ENCODE measurements at regions of chr10 and their contacts with region 1.

Region 1: DNA sequence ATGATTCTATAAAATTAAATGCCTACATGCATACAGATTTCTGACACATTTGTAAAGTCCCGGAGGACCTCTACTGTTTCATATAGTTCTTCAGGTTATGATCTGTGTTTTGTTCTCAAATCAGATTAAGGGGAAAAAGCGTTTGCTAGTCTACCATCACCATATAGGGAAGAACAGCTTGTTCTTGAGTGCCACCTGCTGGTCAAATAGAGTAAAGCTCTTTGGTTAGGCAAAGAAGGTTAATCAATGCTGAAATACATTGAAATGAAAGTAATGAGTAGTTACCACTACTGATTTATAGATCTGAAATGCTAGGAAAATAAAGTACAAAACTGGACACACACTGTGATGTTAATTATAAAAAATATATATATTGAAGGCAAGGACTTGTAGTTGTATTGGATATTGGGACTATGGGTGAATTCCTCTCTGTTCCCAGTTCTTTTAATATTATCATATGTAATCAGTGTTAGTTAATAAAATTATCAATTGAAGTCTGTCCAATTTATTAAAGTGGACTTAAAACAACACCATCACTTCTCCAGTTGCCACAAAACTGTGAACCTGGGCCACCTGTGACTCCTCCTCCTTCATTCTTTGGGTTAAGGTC is 72.6 kb upstream of the PDLIM1 start:
- DNase-seq: no peak
- H3K4me3 ChIP-seq: no peak overlapping the region
- H3K27ac ChIP-seq: no peak overlapping the region
- H3K4me1 ChIP-seq: peaks cover 0 to 3% (median 0%) of the 10 kb centered on the region in 4 experiments; a peak in 2 of 7 replicates
- H3K27me3 ChIP-seq: no peaks in the 10 kb centered on the region
- CTCF ChIP-seq: peak in 2 of 3 experiments; percentile 73 to 82; a peak in 3 of 4 replicates
- EP300 ChIP-seq: no peak
- POLR2A ChIP-seq: no peak
- RAD21 ChIP-seq: peak; percentile 95 to 96

Region 2: DNA sequence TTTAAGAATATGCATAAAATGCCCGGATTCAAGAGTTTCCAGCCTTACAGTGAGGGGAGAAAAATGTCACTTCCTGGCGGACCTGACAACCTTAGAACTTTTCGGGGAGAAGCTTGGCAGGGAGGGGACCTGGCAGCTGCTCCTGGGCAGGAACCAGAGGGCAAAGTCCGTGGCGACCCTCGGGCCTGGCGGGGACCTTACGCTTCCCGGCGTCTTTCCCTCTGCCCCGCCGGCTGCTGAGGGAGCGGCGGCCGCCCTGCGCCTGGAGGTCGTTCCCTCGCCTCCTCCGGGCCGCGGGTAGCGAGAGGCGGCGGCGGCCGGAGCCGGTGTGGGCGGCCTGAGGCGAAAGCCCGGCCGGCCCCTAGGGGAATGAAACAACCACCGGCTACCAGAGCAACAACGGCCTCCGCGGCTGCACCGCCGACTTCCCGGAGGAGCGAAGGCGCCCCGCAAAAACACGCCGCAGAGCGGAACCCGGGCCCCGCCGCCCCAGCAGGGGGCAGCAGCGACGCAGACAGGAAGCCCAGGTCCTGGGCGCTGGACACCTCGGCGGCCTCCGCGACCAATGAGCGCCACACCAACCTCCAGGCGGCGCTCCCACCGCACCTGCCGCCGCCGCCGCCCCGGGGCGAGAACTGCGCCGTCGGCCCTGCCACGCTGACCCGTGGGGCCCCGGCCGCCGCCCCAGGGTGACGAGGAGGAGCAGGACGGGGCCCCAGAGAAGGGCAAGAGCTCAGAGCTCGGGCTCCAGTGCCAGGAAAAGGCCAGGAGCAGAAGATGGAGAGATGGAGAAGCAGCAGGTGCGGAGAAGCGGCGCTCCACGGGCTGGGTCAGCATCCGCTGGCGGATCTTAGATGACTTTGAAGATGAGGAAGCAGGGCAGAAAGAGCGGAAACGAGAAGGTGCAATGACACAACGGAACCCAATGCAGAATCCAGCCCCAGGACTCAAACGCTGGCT is 179.9 kb before region 1 on chr10:
- CTCF ChIA-PET with region 1: interaction called, 11 read pairs
- POLR2A ChIA-PET with region 1: no interaction called
- DNase-seq: peak; percentile 51 to 96
- H3K4me3 ChIP-seq: peak overlapping the region; percentile 45 to 67 (median 62)
- H3K27ac ChIP-seq: peak overlapping the region; percentile 71
- H3K4me1 ChIP-seq: peaks cover 0 to 4% (median 0%) of the 10 kb centered on the region in 4 experiments; a peak in 2 of 7 replicates
- H3K27me3 ChIP-seq: no peaks in the 10 kb centered on the region
- CTCF ChIP-seq: peak; percentile 84 to 98 (median 86)
- EP300 ChIP-seq: peak in 1 of 2 experiments; percentile 69; a peak in 1 of 3 replicates
- POLR2A ChIP-seq: peak in 1 of 2 experiments; percentile 67; a peak in 1 of 3 replicates
- RAD21 ChIP-seq: peak; percentile 76 to 83

Region 3: GRCh38 chr10:95260397-95260881 is 103.0 kb before region 1 on chr10:
- CTCF ChIA-PET with region 1: interaction called, 17 read pairs
- POLR2A ChIA-PET with region 1: interaction called, 4 read pairs
- DNase-seq: peak in 1 of 2 experiments; percentile 28
- H3K4me3 ChIP-seq: no peak overlapping the region
- H3K27ac ChIP-seq: no peak overlapping the region
- H3K4me1 ChIP-seq: peaks cover 5 to 21% (median 12%) of the 10 kb centered on the region in 4 experiments
- H3K27me3 ChIP-seq: no peaks in the 10 kb centered on the region
- CTCF ChIP-seq: no peak
- EP300 ChIP-seq: no peak
- POLR2A ChIP-seq: no peak
- RAD21 ChIP-seq: no peak

Region 4: DNA sequence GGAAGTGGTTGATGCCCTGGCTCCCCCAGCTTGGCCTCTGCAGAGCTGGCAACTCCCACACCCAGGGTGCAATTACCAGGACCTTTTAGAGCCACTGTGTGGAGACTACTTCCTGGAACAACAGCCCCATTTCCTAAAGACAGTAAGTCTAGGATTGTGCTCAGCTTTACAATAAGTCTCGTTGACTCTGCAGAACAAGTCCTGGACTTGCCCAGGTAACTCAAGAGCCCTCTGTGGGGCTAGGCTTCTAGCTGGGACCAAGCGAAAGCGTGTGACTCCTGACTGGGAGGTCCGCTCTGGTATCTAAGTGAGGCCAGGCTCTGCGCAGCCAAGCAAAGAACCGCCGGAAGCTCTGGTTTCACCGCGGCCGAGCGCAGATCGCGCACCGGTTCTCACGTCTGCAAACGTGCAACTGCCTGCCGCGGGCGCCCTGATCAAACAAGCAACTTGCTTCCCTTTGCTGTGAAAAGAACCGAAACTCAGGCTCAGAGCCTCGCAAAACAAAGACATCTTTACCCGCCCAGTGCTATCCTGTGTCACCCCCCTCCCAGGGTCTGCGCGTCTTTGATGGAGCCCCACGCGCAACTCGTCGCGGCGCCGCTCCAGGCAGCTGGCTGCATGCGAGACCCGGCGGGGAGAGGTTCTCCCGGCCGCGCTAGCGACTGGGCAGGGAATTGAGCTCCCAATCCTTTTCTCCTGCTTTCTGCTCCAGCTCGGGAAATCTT is 68.2 kb before region 1 on chr10:
- CTCF ChIA-PET with region 1: interaction called, 39 read pairs
- POLR2A ChIA-PET with region 1: no interaction called
- DNase-seq: peak in 1 of 2 experiments; percentile 64
- H3K4me3 ChIP-seq: peak overlapping the region; percentile 2 to 51 (median 35); a peak in 7 of 8 replicates
- H3K27ac ChIP-seq: no peak overlapping the region
- H3K4me1 ChIP-seq: peaks cover 0 to 8% (median 7%) of the 10 kb centered on the region in 4 experiments; a peak in 6 of 7 replicates
- H3K27me3 ChIP-seq: peaks cover 2 to 30% (median 26%) of the 10 kb centered on the region in 4 experiments
- CTCF ChIP-seq: peak in 1 of 3 experiments; percentile 2; a peak in 1 of 4 replicates
- EP300 ChIP-seq: no peak
- POLR2A ChIP-seq: no peak
- RAD21 ChIP-seq: no peak

Region 5: DNA sequence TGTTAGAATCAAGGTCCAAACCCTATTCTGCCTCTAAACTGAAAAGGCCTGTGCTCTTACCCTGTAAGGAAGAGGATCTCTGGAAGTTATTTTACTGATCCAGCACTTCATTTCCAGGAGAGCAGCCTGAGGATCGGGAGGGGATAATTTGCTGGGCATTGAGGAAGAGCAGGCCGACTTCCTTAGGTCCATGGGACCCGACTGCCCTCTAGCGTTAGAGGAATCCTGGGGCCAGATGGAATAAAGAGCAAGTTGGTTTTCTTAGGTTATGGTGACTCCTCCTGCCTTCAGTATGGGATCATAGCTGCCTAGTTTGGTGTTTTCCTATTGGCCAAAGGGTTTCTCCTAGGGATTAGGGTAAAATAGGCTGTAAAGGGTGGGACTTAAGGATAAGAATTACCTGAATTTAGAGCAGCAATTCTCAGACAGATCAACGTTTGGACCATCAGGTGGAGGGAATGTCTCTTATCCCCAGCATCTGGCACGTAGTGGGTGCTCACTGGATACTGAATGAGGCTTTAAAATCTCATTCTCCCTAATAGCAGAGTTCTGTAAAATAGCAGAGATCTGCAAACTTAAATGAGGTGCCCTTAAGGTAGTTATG is 237.8 kb after region 1 on chr10:
- CTCF ChIA-PET with region 1: interaction called, 39 read pairs
- POLR2A ChIA-PET with region 1: interaction called, 4 read pairs
- DNase-seq: peak; percentile 84 to 88
- H3K4me3 ChIP-seq: no peak overlapping the region
- H3K27ac ChIP-seq: no peak overlapping the region
- H3K4me1 ChIP-seq: peaks cover 0 to 3% (median 0%) of the 10 kb centered on the region in 4 experiments; a peak in 1 of 7 replicates
- H3K27me3 ChIP-seq: no peaks in the 10 kb centered on the region
- CTCF ChIP-seq: peak; percentile 78 to 99 (median 98)
- EP300 ChIP-seq: no peak
- POLR2A ChIP-seq: no peak
- RAD21 ChIP-seq: peak; percentile 100

Measured in H1 (cell line).